Activated CD4-positive, alpha-beta memory T cell treated with anti-CD3 and anti-CD28 coated beads, Interleukin-2, amount 10 ng/mL, durations not matched to agents 7 days and 5 days (primary cell): ENCODE measurements at regions of chr1 and their contacts with region 1.

Region 1: DNA sequence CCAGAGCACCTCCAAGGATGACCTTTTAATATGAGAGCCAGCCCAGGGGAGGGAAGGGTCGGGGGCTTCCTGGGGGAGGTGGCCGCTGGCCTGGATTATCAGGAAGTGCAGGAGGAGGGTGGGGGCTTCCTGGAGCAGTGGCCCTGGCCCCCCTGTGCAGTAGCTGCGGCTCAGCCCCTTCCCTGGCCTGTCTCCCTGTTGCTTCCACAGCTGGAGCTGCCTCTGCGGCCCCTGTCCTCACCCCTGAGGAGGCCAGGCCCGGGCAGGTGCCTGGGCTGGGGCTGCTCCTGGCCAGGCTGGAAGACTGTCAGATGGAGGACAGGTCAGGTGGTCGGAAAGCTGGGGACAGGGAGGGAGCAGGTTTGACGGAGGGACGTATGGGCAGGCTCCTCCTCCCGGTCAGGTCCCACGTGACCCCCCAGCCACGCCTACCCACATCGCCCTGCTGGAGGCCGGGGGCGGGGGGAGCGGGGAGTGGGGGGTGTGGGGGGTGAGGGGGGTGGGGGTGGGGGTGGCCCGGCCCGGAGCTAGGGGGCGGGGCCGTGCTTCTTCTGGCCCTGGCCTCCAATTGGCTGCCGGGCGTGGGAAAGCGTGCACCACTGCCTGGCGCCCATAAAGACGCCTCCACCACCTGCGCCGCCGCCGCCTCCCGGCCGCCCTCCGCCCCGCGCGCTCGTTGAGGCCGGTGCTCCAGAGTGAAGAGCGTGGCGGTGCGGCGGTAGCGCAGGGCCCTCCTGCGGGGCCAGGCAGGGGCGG is 10.2 kb upstream of the TNFRSF14 start:
- DNase-seq: peak; percentile 94
- H3K4me3 Mint-ChIP-seq: peak overlapping the region; percentile 94
- H3K27ac Mint-ChIP-seq: peak overlapping the region; percentile 99
- H3K4me1 Mint-ChIP-seq: peaks cover 22% of the 10 kb centered on the region
- H3K27me3 Mint-ChIP-seq: peaks cover 9% of the 10 kb centered on the region

Region 2: DNA sequence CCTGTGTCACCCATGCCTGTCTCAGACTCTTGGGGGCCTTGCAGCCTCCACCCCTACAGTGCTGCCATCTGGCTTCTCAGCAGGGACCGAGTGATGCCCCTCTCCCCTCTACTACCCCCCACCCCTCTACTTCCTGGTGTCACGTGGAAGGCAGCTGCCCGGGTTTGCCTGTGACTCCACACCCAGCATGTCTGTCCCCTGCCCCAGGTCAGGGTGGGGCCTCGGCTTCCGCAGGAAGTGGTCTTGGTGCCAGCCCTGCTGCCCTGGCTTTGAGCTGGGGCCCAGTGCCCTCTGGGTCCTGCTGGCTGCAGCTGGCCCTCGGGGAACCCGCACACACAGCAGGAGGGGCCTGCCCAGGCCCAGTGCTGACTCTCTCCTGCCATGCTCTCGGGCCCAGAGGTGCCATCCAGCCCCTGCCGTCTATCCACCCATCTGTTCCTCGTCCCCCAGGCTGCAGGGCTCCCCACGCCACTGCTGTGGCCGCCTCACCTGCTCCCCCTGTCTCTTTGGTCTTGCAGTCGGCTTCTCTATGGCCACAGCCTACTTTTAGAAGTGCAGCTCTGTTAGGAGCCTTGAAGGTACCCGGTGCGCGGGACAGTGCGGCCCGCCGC is 45.8 kb before region 1 on chr1:
- CTCF ChIA-PET with region 1: no interaction called
- POLR2A ChIA-PET with region 1: interaction called, 13 read pairs
- DNase-seq: peak; percentile 63
- H3K4me3 Mint-ChIP-seq: no peak overlapping the region
- H3K27ac Mint-ChIP-seq: peak overlapping the region; percentile 81
- H3K4me1 Mint-ChIP-seq: peaks cover 26% of the 10 kb centered on the region
- H3K27me3 Mint-ChIP-seq: no peaks in the 10 kb centered on the region

Region 3: DNA sequence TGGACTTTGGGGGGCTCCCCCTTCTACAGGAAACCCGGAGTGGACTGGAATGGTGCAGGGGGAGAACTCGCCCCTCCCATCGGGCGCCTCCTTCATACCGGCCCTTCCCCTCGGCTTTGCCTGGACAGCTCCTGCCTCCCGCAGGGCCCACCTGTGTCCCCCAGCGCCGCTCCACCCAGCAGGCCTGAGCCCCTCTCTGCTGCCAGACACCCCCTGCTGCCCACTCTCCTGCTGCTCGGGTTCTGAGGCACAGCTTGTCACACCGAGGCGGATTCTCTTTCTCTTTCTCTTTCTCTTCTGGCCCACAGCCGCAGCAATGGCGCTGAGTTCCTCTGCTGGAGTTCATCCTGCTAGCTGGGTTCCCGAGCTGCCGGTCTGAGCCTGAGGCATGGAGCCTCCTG is 10.3 kb after region 1 on chr1 and contains the start of gene TNFRSF14:
- CTCF ChIA-PET with region 1: interaction called, 32 read pairs
- POLR2A ChIA-PET with region 1: interaction called, 82 read pairs
- DNase-seq: peak; percentile 85
- H3K4me3 Mint-ChIP-seq: peak within 1 kb of the TSS; percentile 95
- H3K27ac Mint-ChIP-seq: peak within 1 kb of the TSS; percentile 95
- H3K4me1 Mint-ChIP-seq: peaks cover 44% of the 10 kb centered on the region
- H3K27me3 Mint-ChIP-seq: no peaks in the 10 kb centered on the region
- total RNA-seq, gene TNFRSF14: 171 to 173 TPM

Region 4: DNA sequence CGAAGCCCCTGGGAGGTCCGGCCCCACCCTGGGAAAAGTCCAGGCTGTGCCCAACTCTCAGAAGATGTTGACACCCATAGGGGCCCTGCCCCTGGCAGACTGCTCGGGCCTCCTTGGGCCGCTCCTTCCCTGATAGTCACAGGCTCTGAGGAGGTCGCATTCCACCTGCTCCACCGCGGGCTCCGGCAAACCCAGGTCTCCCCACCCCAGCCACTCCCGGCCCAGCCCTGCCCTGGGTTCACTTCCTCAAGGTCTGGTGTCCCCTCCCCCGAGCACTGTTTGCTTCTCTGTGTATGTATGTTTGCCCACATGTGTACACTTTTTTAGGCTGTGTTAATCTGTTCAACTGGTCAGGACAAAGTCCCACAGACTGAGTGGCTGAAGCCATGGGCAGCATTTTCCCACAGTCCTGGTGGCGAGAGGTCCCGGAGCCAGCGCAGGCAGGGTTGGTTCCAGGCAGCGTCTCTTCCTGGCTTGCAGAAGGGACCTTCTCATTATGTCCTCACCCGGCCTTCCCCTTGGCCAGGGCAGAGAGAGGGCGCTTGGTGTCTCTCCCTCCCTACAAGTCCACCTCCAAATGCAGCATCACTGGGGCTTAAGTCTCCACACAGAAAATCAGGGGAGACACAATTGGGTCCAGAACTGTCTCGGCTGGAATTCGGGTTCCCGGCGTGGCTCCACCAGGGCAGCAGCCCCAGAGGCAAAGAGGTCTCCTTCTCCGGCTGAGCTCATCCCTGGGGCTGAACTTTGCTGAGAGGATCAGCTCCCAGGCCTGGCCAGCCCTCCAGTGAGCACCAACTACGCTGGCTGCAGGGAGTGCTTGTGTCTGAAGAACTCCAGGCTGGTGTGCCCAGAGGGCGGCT is 30.1 kb after region 1 on chr1:
- CTCF ChIA-PET with region 1: interaction called, 18 read pairs
- POLR2A ChIA-PET with region 1: interaction called, 21 read pairs
- DNase-seq: no peak
- H3K4me3 Mint-ChIP-seq: no peak overlapping the region
- H3K27ac Mint-ChIP-seq: peak overlapping the region; percentile 92
- H3K4me1 Mint-ChIP-seq: peaks cover 58% of the 10 kb centered on the region
- H3K27me3 Mint-ChIP-seq: peaks cover 3% of the 10 kb centered on the region